RWPE1 (cell line): ENCODE measurements at regions of chrX and their contacts with region 1.

Region 1: DNA sequence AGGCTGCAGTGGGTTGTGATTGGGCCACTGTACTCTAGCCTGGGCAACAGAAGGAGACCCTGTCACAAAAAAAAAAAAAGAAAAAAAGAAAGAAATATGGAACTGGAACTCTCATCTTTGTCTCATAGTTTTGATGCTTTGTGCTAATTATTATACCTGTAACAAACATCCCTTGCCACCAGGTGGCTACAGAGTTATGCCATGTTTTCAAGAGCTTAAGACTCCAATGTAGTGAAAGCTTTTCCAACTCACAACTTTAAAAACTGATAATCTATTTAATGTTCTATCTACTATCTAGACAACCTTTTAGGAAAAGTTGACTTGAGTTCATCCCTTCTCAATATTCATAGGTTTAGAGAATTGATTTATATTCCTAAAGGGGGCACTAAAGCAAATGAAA is 42.4 kb downstream of the HTR2C start:
- DNase-seq: no peak
- H3K27ac ChIP-seq: no peak overlapping the region
- CTCF ChIP-seq: peak; percentile 27; the same call in 1 of the 2 replicates

Region 2: DNA sequence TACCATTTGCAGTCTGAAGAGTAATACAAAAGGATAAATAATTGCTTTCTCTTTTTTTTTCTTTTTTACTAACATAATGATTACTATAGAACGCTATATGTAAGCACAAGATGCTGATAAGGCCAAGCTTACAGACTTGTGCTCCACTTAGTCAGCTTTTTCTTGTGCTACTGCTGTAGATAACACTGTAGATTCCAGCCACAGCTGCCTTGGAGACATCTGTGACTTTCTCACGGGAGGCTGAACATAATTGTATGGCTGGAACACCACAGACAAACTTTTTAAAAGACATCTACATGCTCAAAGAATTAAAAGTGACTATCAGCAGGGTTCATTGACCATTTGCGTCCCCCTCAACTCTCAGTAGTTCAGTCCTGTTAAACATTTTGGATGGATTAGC is 1404.0 kb before region 1 on chrX:
- CTCF ChIA-PET with region 1: interaction called, 11 read pairs
- POLR2A ChIA-PET with region 1: no interaction called
- DNase-seq: no peak
- H3K27ac ChIP-seq: no peak overlapping the region
- CTCF ChIP-seq: no peak

Region 3: DNA sequence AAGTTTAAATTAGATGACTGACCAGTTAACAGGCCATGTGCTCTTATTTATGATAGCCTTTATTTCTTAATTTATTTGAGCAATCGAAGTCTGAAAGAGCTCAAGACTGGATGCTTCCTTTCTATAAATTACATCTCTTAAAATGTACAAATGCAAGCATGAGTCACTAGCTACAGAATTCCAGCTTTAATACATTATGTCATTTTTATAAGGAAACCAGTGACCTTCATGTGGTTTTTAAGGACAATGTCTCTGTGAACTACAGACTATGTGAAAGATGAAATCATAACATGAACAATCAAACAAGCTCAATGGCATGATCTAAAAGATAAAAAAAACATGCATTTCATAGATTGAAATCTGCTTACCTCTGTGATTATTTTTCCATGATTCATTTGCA is 27.0 kb before region 1 on chrX:
- CTCF ChIA-PET with region 1: no interaction called
- POLR2A ChIA-PET with region 1: no interaction called
- DNase-seq: no peak
- H3K27ac ChIP-seq: no peak overlapping the region
- CTCF ChIP-seq: no peak

Region 4: DNA sequence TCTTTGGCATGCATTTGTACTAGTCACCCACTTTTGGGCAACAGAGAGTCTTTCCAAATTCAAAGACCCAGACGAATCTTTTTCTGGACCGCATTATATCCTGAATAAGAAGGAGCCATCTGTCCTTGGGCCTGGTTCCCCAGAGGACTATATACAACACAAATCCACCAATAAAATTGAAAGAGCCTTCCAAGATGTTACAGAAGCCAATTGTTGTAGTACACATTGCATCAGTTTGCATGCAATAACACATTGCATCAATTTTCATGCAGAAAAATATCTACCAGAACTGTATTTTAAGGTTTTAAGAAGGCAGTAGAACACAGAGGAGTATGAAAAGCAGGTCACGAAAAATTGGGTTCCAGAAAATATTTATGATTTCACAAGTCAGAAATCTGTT is 160.7 kb after region 1 on chrX:
- CTCF ChIA-PET with region 1: no interaction called
- POLR2A ChIA-PET with region 1: no interaction called
- DNase-seq: no peak
- H3K27ac ChIP-seq: no peak overlapping the region
- CTCF ChIP-seq: no peak